Endothelial cell of umbilical vein (primary cell): ENCODE measurements at regions of chr5 and their contacts with region 1.

Region 1: GRCh38 chr5:142748568-142749249 is 21.5 kb upstream of the ARHGAP26 start:
- DNase-seq: peak; percentile 13
- H3K4me3 ChIP-seq: no peak overlapping the region
- H3K27ac ChIP-seq: peak overlapping the region; percentile 57
- H3K4me1 ChIP-seq: peaks cover 35% of the 10 kb centered on the region
- H3K27me3 ChIP-seq: no peaks in the 10 kb centered on the region
- CTCF ChIP-seq: peak; percentile 18 to 19
- POLR2A ChIP-seq: no peak

Region 2: DNA sequence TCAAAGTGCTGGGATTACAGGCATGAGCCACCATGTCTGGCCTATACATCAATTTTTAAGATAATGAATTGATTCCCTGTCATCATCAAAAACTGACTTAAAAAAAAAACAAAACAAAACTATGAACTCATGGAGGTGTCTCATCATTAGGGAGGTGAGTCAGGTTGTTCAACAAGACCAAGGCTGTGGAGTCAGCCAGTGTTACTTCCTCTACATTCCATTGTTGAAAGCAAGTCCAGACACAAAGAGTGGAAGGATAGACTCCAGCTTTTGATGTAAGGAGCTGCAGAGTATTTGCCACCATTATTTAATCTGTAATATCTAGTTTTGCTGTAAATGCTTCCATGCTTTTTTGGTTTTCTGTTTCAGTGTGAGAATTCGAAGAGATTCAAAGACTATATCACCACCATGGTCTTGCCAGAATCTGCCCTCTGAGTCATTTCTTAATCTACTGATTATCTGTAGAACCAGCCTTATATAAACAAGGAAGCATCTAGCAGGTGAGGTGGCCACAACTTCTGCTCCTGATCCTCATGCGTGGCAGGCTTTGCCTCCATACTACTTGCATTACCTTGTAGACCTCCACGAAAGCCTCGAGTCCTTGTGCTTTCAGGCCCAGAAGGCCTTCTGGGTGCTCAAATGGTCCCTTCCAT is 219.0 kb before region 1 on chr5:
- CTCF ChIA-PET with region 1: no interaction called
- POLR2A ChIA-PET with region 1: no interaction called
- dilution Hi-C with region 1: no loop called
- intact Hi-C with region 1: no loop called
- DNase-seq: peak; percentile 72
- H3K4me3 ChIP-seq: no peak overlapping the region
- H3K27ac ChIP-seq: peak overlapping the region; percentile 69
- H3K4me1 ChIP-seq: peaks cover 15% of the 10 kb centered on the region
- H3K27me3 ChIP-seq: no peaks in the 10 kb centered on the region
- CTCF ChIP-seq: no peak
- POLR2A ChIP-seq: no peak

Region 3: GRCh38 chr5:142627383-142628255 is 121.1 kb before region 1 on chr5:
- CTCF ChIA-PET with region 1: no interaction called
- POLR2A ChIA-PET with region 1: no interaction called
- dilution Hi-C with region 1: no loop called
- intact Hi-C with region 1: no loop called
- DNase-seq: no peak
- H3K4me3 ChIP-seq: no peak overlapping the region
- H3K27ac ChIP-seq: no peak overlapping the region
- H3K4me1 ChIP-seq: peaks cover 9% of the 10 kb centered on the region
- H3K27me3 ChIP-seq: peaks cover 2 to 4% of the 10 kb centered on the region in 2 experiments
- CTCF ChIP-seq: no peak
- POLR2A ChIP-seq: no peak

Region 4: GRCh38 chr5:142735331-142736246 is 13.1 kb before region 1 on chr5:
- CTCF ChIA-PET with region 1: interaction called, 4 read pairs
- POLR2A ChIA-PET with region 1: no interaction called
- dilution Hi-C with region 1: no loop called
- intact Hi-C with region 1: loop called (anchors 1 kb)
- DNase-seq: no peak
- H3K4me3 ChIP-seq: no peak overlapping the region
- H3K27ac ChIP-seq: no peak overlapping the region
- H3K4me1 ChIP-seq: peaks cover 4% of the 10 kb centered on the region
- H3K27me3 ChIP-seq: peaks cover 0 to 9% of the 10 kb centered on the region in 2 experiments
- CTCF ChIP-seq: no peak
- POLR2A ChIP-seq: no peak

Region 5: DNA sequence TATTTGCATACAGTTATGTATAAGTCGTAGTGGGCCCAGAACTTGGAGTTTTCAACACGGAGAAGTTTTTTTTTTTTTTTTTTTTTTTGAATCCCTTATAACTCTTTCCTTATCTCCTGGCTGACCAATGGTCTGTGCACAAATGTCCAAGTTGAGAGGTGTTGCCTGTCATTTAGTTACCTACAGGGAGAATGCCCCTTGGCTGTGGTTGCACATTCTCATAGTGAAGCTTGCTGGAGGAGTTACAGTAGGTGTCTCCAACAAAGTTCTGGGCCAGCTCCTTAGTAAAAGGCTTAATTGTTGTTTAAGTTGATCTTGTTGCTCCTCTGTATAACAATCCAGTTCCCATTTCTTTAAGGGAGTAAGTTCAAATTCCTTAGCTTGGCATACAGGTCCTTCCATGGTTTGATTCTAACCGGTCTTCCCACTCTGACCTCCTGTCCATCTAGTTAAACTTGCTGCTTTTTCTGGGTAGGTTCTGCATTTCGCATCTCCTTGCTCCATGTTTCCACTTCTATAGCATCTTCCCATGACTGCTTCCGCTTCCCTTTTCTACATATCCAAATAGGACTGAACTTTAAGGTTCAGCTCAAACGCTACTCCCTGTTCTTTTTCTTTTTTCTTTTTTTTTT is 116.8 kb after region 1 on chr5:
- CTCF ChIA-PET with region 1: interaction called, 22 read pairs
- POLR2A ChIA-PET with region 1: no interaction called
- dilution Hi-C with region 1: no loop called
- intact Hi-C with region 1: loop called (anchors 2 kb)
- DNase-seq: no peak
- H3K4me3 ChIP-seq: no peak overlapping the region
- H3K27ac ChIP-seq: no peak overlapping the region
- H3K4me1 ChIP-seq: peaks cover 2% of the 10 kb centered on the region
- H3K27me3 ChIP-seq: no peaks in the 10 kb centered on the region
- CTCF ChIP-seq: no peak
- POLR2A ChIP-seq: no peak

Region 6: GRCh38 chr5:142874537-142874936 is 125.8 kb after region 1 on chr5:
- CTCF ChIA-PET with region 1: interaction called, 36 read pairs
- POLR2A ChIA-PET with region 1: no interaction called
- dilution Hi-C with region 1: no loop called
- intact Hi-C with region 1: loop called (anchors 2 kb)
- DNase-seq: peak; percentile 96
- H3K4me3 ChIP-seq: no peak overlapping the region
- H3K27ac ChIP-seq: peak overlapping the region; percentile 42
- H3K4me1 ChIP-seq: peaks cover 40% of the 10 kb centered on the region
- H3K27me3 ChIP-seq: no peaks in the 10 kb centered on the region
- CTCF ChIP-seq: no peak
- POLR2A ChIP-seq: no peak

Region 7: DNA sequence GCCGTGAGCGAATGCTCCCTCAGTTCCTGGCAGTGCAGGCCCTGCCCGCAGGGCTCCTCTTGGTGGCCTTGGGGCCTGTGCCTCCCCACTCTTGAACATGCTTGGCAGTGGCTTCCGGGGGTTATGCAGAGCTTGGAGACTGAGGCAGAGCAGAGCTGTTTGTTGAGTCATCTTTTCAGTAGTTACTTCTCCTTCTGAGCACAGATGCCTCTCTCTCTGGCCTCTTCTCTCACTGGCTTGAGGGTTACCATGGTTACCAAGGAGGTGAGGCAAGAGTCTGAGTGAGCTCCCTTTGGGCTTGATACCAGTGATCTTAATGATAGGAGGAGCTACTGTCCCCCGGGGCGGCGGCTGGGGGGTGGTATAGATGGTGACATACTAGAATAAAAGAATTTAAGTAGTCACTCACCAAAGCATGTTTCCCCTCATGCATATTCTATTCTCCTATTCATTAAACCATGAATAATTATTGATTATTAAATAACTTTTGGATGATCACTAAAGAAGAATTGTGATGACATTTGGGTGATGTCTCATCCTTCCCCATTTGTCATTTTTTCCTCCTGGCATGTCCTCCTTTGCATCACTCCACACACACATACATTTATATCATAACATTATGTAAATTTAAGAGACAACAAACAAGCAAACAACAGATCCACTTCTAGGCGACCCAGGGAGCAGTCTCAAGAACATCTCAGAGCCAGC is 132.5 kb after region 1 on chr5:
- CTCF ChIA-PET with region 1: interaction called, 36 read pairs
- POLR2A ChIA-PET with region 1: no interaction called
- dilution Hi-C with region 1: no loop called
- intact Hi-C with region 1: loop called (anchors 1 kb)
- DNase-seq: no peak
- H3K4me3 ChIP-seq: no peak overlapping the region
- H3K27ac ChIP-seq: no peak overlapping the region
- H3K4me1 ChIP-seq: peaks cover 18% of the 10 kb centered on the region
- H3K27me3 ChIP-seq: no peaks in the 10 kb centered on the region
- CTCF ChIP-seq: no peak
- POLR2A ChIP-seq: no peak

Region 8: GRCh38 chr5:142888469-142889085 is 139.9 kb after region 1 on chr5:
- CTCF ChIA-PET with region 1: interaction called, 33 read pairs
- POLR2A ChIA-PET with region 1: no interaction called
- dilution Hi-C with region 1: no loop called
- intact Hi-C with region 1: no loop called
- DNase-seq: peak; percentile 55
- H3K4me3 ChIP-seq: no peak overlapping the region
- H3K27ac ChIP-seq: no peak overlapping the region
- H3K4me1 ChIP-seq: peaks cover 3% of the 10 kb centered on the region
- H3K27me3 ChIP-seq: no peaks in the 10 kb centered on the region
- CTCF ChIP-seq: peak; percentile 50 to 60
- POLR2A ChIP-seq: no peak

Region 9: DNA sequence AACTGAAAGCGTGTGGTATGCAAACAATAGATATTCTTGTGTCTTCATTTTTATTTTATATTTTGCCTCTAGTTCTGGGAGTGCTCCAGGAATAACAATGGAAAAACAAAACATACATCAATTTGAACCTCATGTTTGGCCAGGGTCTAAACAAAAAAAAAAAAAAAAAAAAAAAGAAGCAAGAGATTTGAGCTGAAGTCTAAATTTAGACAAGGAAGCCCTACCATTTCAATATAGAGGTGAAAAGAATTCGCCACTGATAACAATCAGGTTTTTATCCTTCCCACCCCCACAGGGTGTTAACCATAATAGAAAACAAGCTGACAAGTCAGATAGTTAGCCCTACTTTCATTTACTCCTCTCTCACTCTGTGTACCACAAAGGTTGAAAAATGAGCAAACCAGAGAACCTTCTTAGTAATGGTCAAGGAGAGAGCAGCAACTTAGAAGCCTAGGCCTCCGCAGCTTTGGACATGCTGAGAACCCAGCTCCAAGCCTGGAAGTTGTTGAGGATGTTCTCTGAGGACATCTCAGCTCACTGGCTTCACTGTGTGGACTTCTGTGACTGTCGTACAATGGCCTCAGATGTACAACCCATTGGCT is 945.0 kb after region 1 on chr5:
- CTCF ChIA-PET with region 1: no interaction called
- POLR2A ChIA-PET with region 1: no interaction called
- dilution Hi-C with region 1: no loop called
- intact Hi-C with region 1: no loop called
- DNase-seq: peak; percentile 48
- H3K4me3 ChIP-seq: no peak overlapping the region
- H3K27ac ChIP-seq: no peak overlapping the region
- H3K4me1 ChIP-seq: no peaks in the 10 kb centered on the region
- H3K27me3 ChIP-seq: no peaks in the 10 kb centered on the region
- CTCF ChIP-seq: no peak
- POLR2A ChIP-seq: no peak